ENCODE measurements at regions of chr1 and their contacts with region 1.

Region 1: DNA sequence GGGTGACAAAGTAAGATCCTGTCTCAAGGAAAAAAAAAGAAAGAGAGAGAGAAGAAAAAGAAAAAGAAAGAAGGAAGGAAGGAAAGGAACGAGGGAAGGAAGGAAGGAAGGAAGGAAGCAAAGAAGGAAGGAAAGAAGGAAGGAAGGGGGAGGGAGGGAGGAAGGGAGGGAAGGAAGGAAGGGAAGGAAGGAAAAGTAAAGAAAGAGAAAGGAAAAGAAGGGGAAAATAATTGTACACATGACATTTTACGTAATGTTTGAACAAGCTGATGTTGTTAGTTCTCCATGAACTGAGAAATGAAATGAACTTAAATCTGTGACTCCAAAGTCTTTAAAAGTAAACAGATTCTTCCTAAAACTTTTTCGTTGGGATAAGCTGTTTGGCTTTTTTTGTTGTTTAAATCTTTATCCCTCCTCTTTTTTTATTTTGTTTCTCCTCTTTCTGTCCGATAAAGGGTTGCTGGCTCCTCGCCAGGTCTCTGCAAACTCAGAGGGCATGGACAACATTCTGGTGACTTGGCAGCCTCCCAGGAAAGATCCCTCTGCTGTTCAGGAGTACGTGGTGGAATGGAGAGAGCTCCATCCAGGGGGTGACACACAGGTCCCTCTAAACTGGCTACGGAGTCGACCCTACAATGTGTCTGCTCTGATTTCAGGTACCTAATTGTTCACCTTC is 59.8 kb downstream of the IL12RB2 start:
- DNase-seq: peak in 1 of 2 donors; percentile 30
- ATAC-seq: no peak
- H3K4me3 ChIP-seq: no peak overlapping the region
- H3K27ac ChIP-seq: no peak overlapping the region
- H3K4me1 ChIP-seq: peaks cover 19% of the 10 kb centered on the region
- H3K27me3 ChIP-seq: no peaks in the 10 kb centered on the region
- CTCF ChIP-seq: no peak

Region 2: GRCh38 chr1:67126111-67126746 is 241.3 kb before region 1 on chr1:
- intact Hi-C with region 1: no loop called
- DNase-seq: no peak
- ATAC-seq: no peak
- H3K4me3 ChIP-seq: no peak overlapping the region
- H3K27ac ChIP-seq: no peak overlapping the region
- H3K4me1 ChIP-seq: no peaks in the 10 kb centered on the region
- H3K27me3 ChIP-seq: no peaks in the 10 kb centered on the region
- CTCF ChIP-seq: no peak

Region 3: GRCh38 chr1:67468066-67468718 is 100.7 kb after region 1 on chr1:
- intact Hi-C with region 1: loop called in 1 of 2 experiments (anchors 5 kb)
- DNase-seq: peak; percentile 30 to 57
- ATAC-seq: peak; percentile 74 to 87 (median 86)
- H3K4me3 ChIP-seq: no peak overlapping the region
- H3K27ac ChIP-seq: peak overlapping the region; percentile 77
- H3K4me1 ChIP-seq: peaks cover 37% of the 10 kb centered on the region
- H3K27me3 ChIP-seq: no peaks in the 10 kb centered on the region
- CTCF ChIP-seq: no peak

Measured in psoas muscle (tissue), 8 donors.